Dorsolateral prefrontal cortex (tissue), 120 donors: ENCODE measurements at regions of chr2 and their contacts with region 1.

Region 1: GRCh38 chr2:9205963-9206948 is at the start of gene ASAP2:
- DNase-seq: peak; percentile 47 to 82 (median 64)
- H3K4me3 ChIP-seq: peak within 1 kb of the TSS; percentile 63 to 91 (median 83)
- H3K27ac ChIP-seq: peak within 1 kb of the TSS in 58 of 59 donors; percentile 9 to 89 (median 79)
- H3K27me3 ChIP-seq: no peaks in the 10 kb centered on the region
- CTCF ChIP-seq: peak; percentile 46 to 93 (median 79)
- total RNA-seq, gene ASAP2: 30.8 to 63.8 (median 48.4) TPM

Region 2: DNA sequence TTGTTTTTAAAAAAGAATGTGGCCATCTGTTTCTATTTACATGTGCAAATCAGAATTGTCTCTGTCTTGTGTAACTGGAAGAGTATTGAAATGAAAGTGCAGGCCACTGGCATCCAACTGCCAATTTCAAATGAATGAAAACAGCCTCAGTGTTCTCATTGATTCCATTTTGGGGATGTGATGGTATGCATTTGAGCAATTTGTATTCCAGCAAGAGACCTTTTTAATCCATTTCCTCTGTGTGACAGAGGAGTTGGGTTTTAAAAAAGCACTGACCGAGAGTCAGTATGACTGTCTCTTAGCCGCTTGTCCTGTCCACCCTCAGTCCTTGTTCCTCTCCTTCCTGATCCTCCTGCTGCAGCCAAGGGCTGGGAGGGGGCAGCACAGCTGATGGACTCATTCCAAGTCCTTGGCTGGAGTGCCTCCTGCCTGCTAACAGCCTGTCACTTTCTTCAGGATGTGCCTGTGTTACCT is 50.4 kb after region 1 on chr2:
- intact Hi-C with region 1: loop called (anchors 5 kb)
- DNase-seq: peak in 1 of 10 donors; percentile 55
- H3K4me3 ChIP-seq: peak overlapping the region in 22 of 59 donors; percentile 4 to 40 (median 19)
- H3K27ac ChIP-seq: peak overlapping the region in 54 of 59 donors; percentile 13 to 92 (median 68)
- H3K27me3 ChIP-seq: no peaks in the 10 kb centered on the region
- CTCF ChIP-seq: no peak

Region 3: GRCh38 chr2:9333591-9334171 is 127.4 kb after region 1 on chr2:
- intact Hi-C with region 1: loop called (anchors 2 to 5 kb)
- DNase-seq: peak in 7 of 10 donors; percentile 32 to 73 (median 50)
- H3K4me3 ChIP-seq: no peak overlapping the region
- H3K27ac ChIP-seq: peak overlapping the region in 1 of 59 donors; percentile 3
- H3K27me3 ChIP-seq: no peaks in the 10 kb centered on the region
- CTCF ChIP-seq: peak; percentile 31 to 80 (median 62)

Region 4: DNA sequence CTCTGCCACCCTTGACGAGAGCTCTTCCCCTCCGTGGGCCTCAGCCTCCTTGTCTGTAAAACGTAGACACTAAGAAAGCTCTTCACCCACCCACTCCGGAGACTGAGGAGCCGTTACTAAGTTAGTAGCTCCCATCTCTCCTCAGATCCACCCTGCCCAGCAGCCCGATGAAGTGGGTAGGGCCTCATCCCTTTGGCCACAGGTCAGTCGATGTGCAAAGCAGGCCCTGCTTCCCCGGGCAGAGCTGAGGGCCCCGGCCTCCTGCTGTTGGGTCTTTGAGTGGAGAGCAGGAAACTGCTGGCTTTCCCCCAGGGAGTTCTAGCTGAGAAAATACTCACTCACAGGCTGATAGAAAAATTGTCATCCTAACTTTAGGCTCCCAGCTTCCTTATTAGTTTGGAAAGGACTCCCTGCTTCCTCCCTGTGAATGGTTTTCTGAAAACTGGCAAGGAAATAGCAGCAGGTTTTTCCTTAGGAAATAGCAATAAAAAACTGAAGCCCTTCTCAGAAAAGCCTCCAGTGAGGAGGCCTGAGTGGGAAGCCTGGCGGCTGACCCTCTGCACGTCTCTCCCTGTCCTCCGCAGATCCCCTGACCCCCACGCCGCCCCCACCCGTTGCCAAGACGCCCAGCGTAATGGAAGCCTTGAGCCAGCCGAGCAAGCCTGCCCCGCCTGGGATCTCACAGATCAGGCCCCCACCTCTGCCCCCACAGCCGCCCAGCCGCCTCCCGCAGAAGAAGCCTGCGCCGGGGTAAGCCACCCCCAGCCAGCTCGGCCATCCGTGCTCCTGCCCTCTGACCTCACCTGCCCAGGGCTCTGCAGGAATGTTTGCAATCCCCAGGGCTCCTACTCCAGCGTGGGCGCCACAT is 186.9 kb after region 1 on chr2:
- intact Hi-C with region 1: no loop called
- DNase-seq: no peak
- H3K4me3 ChIP-seq: no peak overlapping the region
- H3K27ac ChIP-seq: peak overlapping the region in 53 of 59 donors; percentile 0 to 84 (median 67)
- H3K27me3 ChIP-seq: no peaks in the 10 kb centered on the region
- CTCF ChIP-seq: no peak

Region 5: GRCh38 chr2:9423100-9423921 is 217.1 kb after region 1 on chr2 and contains the starts of genes CPSF3 and ITGB1BP1:
- intact Hi-C with region 1: loop called (anchors 2 to 5 kb)
- DNase-seq: peak; percentile 92 to 98 (median 96)
- H3K4me3 ChIP-seq: peak within 1 kb of the TSS; percentile 55 to 100 (median 94)
- H3K27ac ChIP-seq: peak within 1 kb of the TSS; percentile 74 to 98 (median 92)
- H3K27me3 ChIP-seq: no peaks in the 10 kb centered on the region
- CTCF ChIP-seq: peak in 35 of 56 donors; percentile 4 to 64 (median 33)
- total RNA-seq, gene CPSF3: 11.9 to 33.6 (median 22.9) TPM
- total RNA-seq, gene ITGB1BP1: 75.1 to 226 (median 141) TPM